ENCODE measurements at regions of chr17 and their contacts with region 1.

Region 1: DNA sequence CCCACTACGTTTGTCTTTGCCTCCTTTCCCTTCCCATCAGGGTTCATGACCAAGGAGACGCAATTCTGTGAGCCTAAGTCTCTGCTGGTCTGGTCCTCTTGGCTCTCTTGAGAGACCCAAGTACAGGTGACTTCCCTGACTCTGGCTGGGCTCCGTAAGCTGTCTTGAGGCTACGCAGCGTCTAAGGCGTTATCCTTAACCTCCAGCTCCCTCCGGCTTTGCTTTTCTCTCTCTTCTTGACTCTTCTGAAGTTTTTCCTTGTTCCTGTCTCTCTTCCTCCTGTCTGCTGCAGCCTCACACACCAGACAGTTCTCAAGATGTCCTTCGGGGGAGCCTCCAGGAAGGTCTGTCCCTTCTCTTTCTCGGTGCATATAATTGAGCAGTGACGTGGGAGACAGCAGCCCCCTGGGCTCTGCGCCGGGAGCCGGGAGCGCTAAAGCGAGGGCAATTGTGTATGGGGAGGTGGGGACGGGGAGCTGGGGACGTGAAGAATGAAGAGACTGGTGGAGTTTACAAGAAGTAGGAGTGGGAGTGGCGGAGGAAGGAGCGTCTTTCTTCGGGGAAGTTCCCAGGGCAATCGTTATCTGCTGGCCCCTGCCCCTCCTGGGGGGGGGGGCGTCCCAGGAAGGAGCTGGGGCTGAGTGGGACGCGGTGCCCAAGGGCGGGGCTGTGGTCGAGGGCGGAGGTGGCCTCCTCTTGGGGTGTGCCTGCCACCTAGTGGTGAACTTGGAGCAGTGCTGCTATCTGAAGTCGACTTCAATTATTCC is 6.9 kb upstream of the PIRT start:
- DNase-seq: peak; percentile 55 to 89 (median 74)
- ATAC-seq: peak; percentile 95 to 100 (median 97)
- H3K4me3 ChIP-seq: peak overlapping the region in 2 of 4 donors; percentile 40 to 60
- H3K27ac ChIP-seq: no peak overlapping the region
- H3K4me1 ChIP-seq: no peaks in the 10 kb centered on the region
- H3K27me3 ChIP-seq: no peaks in the 10 kb centered on the region
- CTCF ChIP-seq: peak; percentile 82 to 93 (median 89)

Region 2: DNA sequence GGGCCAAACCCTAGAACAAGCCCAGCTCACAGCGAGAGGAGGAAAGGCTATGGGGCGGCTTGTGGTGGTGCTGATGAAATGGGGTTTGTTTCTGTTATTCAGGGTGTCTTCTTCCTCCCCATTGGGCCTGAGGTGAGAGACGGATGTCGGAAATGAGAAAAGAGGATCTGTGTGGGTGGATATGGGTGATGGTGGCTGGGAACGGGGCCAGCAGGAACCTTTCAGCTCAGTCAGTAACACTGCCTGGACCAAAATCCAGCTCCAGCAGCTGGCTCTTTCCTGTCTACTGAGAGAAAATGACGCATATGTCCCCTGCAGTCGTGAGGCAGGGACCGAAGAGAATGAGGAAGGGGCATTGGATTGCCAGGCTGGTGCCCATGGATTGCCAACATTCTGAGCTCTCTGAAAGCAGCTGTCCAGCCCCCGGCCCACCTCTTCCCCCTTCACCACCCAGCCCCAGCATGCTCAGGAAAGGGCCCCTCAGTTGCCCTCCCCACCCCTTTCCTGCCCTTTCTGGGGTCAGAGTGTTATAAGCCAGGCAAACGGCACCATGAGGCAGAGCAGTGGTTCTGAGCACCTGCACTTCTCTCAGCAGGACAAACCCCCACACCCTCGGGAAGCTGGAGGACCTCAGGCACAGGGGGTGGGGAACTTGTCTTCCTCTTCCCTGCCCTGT is 191.7 kb before region 1 on chr17:
- intact Hi-C with region 1: loop called in 1 of 3 experiments (anchors 10 kb)
- DNase-seq: no peak
- ATAC-seq: peak in 2 of 4 donors; percentile 27 to 44
- H3K4me3 ChIP-seq: no peak overlapping the region
- H3K27ac ChIP-seq: no peak overlapping the region
- H3K4me1 ChIP-seq: no peaks in the 10 kb centered on the region
- H3K27me3 ChIP-seq: no peaks in the 10 kb centered on the region
- CTCF ChIP-seq: no peak

Region 3: DNA sequence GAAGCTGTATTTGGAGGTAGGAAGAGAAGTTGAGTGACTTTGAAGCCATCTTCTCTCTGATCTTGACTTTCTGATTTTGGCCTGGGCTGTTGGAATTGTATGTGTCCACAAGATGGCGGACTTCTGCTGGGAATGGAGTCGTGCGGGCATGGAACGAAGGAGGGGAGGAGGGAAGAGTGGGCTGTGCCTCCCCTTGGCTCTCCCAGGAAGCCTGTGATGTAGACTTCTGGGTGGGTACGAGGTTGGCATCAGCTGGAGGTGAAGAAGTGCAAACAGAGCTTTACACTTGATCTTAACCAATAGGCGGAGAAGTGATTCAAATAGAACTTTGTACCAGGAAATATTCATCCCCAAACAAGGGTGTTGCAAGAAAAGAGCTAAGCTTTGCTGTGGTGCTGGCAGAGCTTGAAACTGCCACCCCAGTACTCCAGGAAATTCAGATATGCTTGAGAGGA is 107.6 kb before region 1 on chr17:
- intact Hi-C with region 1: loop called in 1 of 3 experiments (anchors 5 kb)
- DNase-seq: peak in 5 of 6 donors; percentile 56 to 80 (median 77)
- ATAC-seq: peak; percentile 96 to 98 (median 97)
- H3K4me3 ChIP-seq: no peak overlapping the region
- H3K27ac ChIP-seq: peak overlapping the region in 3 of 4 donors; percentile 7 to 74 (median 54)
- H3K4me1 ChIP-seq: peaks cover 0 to 11% (median 4%) of the 10 kb centered on the region in 3 donors
- H3K27me3 ChIP-seq: no peaks in the 10 kb centered on the region
- CTCF ChIP-seq: peak; percentile 63 to 69 (median 66)

Region 4: DNA sequence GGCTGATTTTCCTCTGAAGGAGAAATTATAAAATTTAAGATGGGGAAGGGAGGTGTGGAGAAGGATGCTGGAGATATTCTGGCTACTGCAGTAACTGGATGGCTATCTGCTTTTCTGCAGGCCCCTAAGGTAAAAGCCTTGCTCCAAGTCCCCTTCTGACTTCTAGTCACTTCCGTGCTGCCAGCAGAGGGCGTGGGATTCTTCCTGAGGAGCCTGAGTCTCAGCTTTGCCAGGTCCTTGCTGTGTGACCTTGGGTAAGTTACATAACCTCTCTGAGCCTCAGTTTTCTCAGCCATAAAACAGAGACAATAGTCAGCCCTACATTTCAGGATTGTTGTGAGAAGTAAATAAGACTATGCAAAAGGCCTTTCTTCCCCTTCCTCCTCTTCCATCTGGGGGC is 90.7 kb before region 1 on chr17:
- intact Hi-C with region 1: loop called in 1 of 3 experiments (anchors 5 kb)
- DNase-seq: peak in 4 of 6 donors; percentile 27 to 71 (median 48)
- ATAC-seq: peak in 1 of 4 donors; percentile 47
- H3K4me3 ChIP-seq: no peak overlapping the region
- H3K27ac ChIP-seq: no peak overlapping the region
- H3K4me1 ChIP-seq: peaks cover 16 to 26% (median 20%) of the 10 kb centered on the region in 3 donors
- H3K27me3 ChIP-seq: no peaks in the 10 kb centered on the region
- CTCF ChIP-seq: peak in 2 of 4 donors; percentile 10 to 23

Measured in pancreas (tissue), 10 donors.